Posterior vena cava (tissue), 2 donors: ENCODE measurements at regions of chr10 and their contacts with region 1.

Region 1: DNA sequence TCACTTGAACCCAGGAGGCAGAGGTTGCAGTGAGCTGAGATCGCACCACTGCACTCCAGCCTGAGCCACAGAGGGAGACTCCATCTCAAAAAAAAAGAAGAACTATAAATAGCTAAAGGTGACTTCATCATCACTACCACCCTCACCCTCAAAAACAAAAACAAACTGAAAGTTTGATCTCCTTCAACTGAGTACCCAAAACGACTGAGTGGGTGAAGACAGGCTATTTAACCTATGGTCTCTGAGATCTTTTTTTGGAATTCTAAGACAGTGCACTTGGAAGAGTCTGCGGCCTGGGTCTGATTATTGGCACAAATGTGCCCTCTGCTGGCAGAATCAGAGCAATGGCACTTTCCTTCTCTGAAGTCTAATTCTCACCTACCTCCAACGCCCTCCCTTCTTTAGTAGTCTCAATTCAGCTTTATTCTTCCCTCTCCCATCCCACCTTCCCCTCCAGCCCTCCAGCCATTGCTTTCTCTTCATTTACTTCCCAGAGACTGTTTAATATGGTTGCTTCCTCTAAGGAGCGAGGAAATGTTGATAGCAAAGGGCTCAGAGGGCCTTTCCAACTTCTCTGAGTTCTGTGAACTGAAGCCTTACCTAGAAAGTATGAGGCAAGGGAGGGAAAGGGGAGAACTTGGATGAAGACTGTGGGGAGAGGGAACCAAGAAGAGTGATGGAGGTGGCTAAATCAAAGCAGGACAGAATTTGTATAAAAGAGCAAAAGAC is 2.9 kb upstream of the MYOZ1 start:
- DNase-seq: no peak

Region 2: DNA sequence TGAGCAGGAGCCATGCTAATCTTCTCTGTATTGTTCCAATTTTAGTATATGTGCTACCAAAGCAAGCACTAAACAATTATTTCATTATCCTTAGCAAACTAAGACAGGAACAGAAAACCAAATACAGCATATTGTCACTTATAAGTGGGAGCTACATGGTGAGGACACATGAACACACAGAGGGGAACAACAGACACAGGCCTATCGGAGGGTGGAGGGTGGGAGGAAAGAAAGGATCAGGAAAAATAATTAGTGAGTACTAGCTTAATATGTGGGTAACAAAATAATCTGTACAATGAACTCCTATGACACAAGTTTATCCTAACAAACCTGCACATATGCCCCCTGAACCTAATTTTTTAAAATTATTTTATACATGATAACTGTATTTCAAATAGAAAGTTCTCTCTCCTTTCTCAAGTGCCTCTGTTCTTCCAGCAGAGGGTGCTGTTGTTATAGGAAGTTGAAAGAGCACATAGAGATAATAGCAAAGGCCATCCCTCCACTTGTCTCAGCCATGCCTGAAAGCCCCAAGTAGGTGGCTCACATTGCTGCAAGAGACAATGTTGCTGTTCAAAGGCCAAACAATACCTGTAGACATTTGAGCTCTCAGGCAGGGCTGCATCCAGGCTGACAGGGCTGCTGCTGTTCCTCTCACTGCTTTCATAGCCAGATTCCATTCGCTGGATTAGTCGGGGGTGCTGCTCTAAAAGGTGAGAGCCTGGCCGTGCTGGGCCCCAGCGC is 114.9 kb before region 1 on chr10:
- intact Hi-C with region 1: loop called (anchors 2 to 5 kb)
- DNase-seq: no peak

Region 3: GRCh38 chr10:73576178-73576889 is 67.8 kb before region 1 on chr10:
- intact Hi-C with region 1: loop called in 1 of 2 experiments (anchors 5 kb)
- DNase-seq: no peak

Region 4: DNA sequence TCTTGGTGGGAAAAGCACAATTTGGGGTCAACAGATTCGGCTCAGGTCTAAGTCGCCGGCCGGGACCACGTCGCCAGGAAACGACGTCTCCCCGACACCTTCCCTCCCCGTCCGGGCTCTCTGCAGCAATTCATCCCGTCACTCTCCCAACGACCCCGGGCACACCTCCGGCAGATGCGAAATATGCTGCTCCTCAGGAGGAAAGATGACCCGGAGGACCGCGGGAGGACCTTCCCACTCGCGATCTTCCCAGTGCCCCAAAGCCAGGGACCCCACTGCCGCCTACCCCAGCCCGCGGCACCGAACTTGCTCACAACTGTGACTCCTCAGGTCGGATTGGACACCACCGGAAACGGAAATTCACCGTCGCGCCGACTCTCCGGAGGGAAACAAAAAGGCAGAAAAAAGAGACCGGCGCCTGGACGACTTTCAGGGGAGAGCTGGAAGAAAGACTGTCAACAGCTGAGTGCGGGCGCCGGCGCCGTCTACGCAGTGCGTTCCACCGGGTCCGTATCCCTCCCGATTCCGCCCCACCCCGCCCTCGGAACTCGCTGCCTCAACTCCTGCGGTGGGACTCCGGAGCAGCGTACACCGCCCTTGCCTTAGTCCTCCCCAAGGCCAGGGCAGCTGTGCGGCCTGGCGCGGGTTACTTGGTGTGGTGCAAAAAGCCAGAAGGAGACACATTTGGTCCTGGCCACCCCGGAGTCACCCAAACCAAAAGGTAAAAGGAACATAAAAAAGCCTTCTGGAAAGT is 86.2 kb after region 1 on chr10:
- intact Hi-C with region 1: no loop called
- DNase-seq: peak; percentile 96